Posterior cingulate gyrus (tissue), 11 donors: ENCODE measurements at regions of chr2 and their contacts with region 1.

Region 1: DNA sequence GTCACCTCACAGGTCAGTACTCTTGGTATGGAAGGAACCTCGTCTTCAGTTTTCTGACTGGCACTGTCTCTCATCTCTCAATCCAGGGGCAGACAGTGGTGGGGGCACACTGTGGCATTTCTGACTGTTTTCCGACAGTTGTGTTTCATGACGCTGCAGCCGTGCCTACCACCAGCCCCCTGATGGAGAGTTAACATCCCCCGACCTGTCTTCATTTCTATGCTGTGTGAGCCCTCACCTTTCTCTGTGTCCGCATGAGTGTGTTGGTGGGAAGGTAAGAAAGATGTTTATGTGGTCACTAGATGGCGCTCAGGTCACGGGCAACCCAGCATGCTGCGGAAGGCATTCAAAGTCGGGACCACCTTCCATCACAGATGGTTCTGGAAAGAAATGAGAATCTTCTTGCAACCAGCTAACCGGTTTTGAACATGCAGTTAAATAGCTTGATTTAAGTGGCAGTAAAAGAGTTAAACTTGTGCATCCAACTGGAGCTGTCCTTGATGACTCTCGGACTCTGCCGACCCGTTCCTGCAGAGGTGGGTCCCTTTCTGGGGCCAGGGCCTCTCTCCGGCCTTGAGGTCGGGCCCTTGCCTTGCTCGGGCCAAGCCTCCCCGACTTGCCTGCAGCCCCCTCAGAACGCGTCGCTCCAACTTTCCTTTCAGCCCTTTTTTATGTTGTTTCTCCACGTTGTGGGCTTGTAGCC is 92.4 kb downstream of the DYSF start:
- DNase-seq: peak in 7 of 10 donors; percentile 52 to 92 (median 64)

Region 2: DNA sequence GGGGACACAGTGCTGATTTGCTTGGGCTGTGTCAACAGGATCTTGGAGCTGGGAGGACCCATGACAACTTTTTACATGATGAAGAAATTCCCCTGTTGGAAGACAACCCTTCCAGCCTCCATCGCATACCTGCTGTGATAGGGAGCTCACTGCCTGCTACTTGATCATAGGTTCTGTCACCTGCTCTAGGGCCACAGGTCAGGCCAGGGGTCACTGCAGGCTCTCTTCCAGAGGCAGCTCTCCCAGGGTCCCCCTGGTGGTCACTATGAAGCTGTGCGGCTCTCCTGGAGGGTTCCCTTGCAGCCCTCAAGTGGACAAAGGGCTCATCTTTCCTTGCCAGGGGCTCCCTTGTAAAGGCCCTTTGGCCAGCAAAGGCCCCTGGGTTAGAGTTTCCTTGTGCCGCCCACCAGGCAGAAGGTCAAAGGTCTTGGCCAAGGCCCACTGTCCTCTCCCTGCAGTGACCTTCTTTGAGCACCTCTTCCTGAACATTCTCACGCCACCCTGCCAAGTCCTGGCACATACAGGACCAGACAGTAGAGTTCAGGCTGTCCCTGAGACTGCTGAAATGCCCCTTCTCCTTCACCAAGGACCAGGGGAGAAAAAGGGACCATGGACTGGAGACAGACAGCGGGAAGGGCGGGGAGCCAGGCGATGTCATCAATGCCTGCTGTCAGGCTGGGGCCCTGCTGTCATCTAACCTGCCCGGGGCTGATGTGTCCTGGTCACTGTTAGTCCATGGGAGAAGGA is 252.7 kb after region 1 on chr2:
- intact Hi-C with region 1: loop called (anchors 2 kb)
- DNase-seq: peak in 4 of 10 donors; percentile 19 to 83 (median 36)

Region 3: GRCh38 chr2:72150157-72150865 is 604.6 kb after region 1 on chr2:
- intact Hi-C with region 1: loop called (anchors 1 kb)
- DNase-seq: peak; percentile 28 to 97 (median 86)

Region 4: DNA sequence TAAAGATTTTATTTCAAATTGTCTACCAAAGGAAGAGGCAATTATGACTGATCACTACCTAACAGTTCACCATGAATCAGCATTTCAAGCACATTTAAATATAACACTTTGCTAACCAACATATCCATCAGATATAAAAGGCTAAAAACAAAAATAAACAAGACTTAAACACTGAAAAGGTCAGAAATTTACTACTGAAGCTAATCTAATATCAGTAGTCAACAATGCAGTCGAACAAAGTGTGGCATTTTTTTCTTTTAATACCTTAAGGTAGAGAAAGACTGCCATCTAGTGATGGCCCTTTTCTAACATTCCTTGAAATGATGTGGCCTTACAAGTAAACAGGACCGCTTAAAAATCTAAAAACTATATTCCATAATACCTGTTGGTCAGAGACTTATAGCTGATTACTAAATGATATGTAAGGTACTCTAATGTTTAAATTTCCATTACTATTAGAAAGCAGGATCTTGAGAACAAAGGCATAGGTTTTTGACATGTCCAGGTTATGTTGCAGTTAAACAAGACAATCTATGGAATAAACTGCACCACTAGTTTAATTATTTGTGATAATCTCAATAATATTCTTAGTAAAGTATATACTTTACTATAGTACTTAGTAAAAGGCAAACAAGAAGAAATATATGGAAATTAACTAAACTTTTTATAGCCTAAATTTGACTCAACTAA is 1200.1 kb after region 1 on chr2:
- intact Hi-C with region 1: loop called (anchors 5 kb)
- DNase-seq: no peak